ENCODE measurements at regions of chr7 and their contacts with region 1.

Region 1: GRCh38 chr7:13279854-13280435 is 592.5 kb downstream of the ARL4A start:
- DNase-seq: no peak
- H3K4me3 ChIP-seq: no peak overlapping the region
- H3K4me3 Mint-ChIP-seq: no peak overlapping the region
- H3K27ac Mint-ChIP-seq: no peak overlapping the region
- H3K4me1 ChIP-seq: no peaks in the 10 kb centered on the region; the same call in 1 of the 2 replicates
- H3K4me1 Mint-ChIP-seq: no peaks in the 10 kb centered on the region
- H3K27me3 ChIP-seq: no peaks in the 10 kb centered on the region
- H3K27me3 Mint-ChIP-seq: no peaks in the 10 kb centered on the region
- CTCF ChIP-seq: peak in 1 of 2 experiments; percentile 15

Region 2: DNA sequence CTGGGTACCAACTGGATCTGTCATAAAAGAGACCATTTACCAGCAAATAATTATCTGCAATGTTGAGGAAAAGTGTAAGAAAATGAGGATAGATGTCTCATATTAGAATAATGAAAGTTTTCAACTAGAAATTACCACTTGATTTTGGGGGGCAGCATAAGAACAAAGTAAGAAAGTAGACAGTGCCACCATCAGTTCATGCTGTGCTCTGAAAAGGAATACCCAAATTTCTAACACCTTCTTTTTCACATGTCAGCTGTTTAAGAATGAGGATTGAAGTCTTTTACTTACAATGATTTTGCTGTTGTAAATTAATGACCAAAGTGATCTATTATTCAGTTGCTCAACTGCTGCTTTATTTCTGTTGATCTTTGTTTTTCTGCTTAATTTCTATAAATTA is 131.2 kb after region 1 on chr7:
- CTCF ChIA-PET with region 1: no interaction called
- POLR2A ChIA-PET with region 1: no interaction called
- intact Hi-C with region 1: loop called (anchors 2 kb)
- DNase-seq: no peak
- H3K4me3 ChIP-seq: no peak overlapping the region
- H3K4me3 Mint-ChIP-seq: no peak overlapping the region
- H3K27ac Mint-ChIP-seq: no peak overlapping the region
- H3K4me1 ChIP-seq: peaks cover 12% of the 10 kb centered on the region
- H3K4me1 Mint-ChIP-seq: peaks cover 6% of the 10 kb centered on the region
- H3K27me3 ChIP-seq: no peaks in the 10 kb centered on the region
- H3K27me3 Mint-ChIP-seq: no peaks in the 10 kb centered on the region
- CTCF ChIP-seq: no peak

Region 3: DNA sequence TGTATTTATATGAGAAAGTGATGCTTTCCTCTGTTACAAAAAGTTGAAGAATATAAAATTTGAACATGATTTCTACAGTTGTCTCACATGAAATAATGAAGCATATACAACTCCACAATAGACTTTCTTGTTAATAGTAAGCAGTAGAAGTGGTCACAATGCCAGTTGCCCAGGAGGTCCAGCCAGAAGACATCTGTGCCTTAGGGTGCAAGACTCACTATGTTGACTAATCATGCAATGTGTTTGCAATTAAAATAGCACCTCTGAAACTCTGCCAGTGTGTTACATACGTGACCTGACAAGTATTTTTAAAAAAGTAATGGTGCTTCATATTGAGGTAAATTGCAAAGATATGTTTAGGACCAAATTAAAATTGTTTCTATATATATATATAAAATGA is 162.3 kb after region 1 on chr7:
- CTCF ChIA-PET with region 1: no interaction called
- POLR2A ChIA-PET with region 1: no interaction called
- intact Hi-C with region 1: no loop called
- DNase-seq: no peak
- H3K4me3 ChIP-seq: no peak overlapping the region
- H3K4me3 Mint-ChIP-seq: no peak overlapping the region
- H3K27ac Mint-ChIP-seq: no peak overlapping the region
- H3K4me1 ChIP-seq: 0 out of 2 replicates have a peak, but pooled peaks cover 4% of the 10 kb centered on the region
- H3K4me1 Mint-ChIP-seq: peaks cover 6% of the 10 kb centered on the region
- H3K27me3 ChIP-seq: no peaks in the 10 kb centered on the region
- H3K27me3 Mint-ChIP-seq: no peaks in the 10 kb centered on the region
- CTCF ChIP-seq: no peak

Region 4: DNA sequence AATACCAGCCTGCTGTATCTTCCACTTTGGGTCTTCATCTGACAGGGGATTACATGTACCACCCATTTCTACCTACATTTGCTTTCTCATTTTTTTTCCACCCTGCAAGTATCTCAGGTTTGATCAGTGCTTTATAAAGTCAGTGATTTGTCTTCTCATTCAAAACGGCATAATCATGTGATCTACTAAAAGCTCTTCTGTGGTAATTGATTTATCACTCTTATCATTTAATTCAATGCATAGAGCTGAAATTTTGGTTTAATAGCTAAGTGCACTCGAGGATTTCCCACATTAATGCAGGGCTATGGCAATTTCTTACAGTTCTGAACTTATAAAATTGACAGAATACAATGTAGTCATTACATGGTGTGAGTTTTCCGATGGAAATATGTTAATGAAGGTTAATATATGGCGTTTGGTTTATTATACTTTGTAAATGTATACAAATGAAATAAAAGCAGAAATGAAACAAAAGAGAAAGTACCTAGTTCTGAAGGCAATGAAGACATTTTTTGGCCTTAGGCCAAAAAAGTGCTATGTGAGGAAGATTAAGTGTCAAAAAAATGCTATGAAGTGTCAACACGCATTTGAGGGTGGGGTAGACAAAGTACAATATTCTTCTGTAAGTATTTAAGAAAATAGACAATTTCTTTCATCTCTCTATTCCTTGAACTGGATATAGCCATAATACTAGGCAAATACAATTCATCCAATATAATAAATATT is 252.2 kb after region 1 on chr7:
- CTCF ChIA-PET with region 1: no interaction called
- POLR2A ChIA-PET with region 1: no interaction called
- intact Hi-C with region 1: loop called (anchors 5 kb)
- DNase-seq: no peak
- H3K4me3 ChIP-seq: no peak overlapping the region
- H3K4me3 Mint-ChIP-seq: no peak overlapping the region
- H3K27ac Mint-ChIP-seq: no peak overlapping the region
- H3K4me1 ChIP-seq: no peaks in the 10 kb centered on the region
- H3K4me1 Mint-ChIP-seq: no peaks in the 10 kb centered on the region
- H3K27me3 ChIP-seq: no peaks in the 10 kb centered on the region
- H3K27me3 Mint-ChIP-seq: no peaks in the 10 kb centered on the region
- CTCF ChIP-seq: no peak

Region 5: GRCh38 chr7:13725591-13725990 is 445.6 kb after region 1 on chr7:
- CTCF ChIA-PET with region 1: no interaction called
- POLR2A ChIA-PET with region 1: no interaction called
- intact Hi-C with region 1: loop called (anchors 5 kb)
- DNase-seq: no peak
- H3K4me3 ChIP-seq: no peak overlapping the region
- H3K4me3 Mint-ChIP-seq: no peak overlapping the region
- H3K27ac Mint-ChIP-seq: no peak overlapping the region
- H3K4me1 ChIP-seq: no peaks in the 10 kb centered on the region
- H3K4me1 Mint-ChIP-seq: no peaks in the 10 kb centered on the region
- H3K27me3 ChIP-seq: no peaks in the 10 kb centered on the region
- H3K27me3 Mint-ChIP-seq: no peaks in the 10 kb centered on the region
- CTCF ChIP-seq: peak in 1 of 2 experiments; percentile 22

Region 6: DNA sequence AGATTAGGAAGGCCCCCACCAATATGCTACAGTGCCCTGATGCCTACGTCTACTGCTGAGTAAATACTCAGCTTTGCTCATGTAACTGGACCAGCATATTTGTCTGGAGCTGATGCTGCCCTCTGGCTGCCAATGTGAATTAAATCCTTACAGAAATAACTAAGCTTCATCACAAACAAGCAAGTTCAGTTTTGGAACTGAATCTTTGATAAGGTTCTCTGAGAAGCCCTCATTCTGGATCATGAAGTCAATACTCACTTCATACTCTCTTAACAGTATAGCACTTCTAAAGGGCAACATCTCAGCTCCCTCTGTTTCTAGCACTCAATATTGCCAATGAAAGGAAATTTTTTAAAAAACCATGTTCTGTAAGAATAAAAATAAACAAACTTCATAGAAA is 462.9 kb after region 1 on chr7:
- CTCF ChIA-PET with region 1: interaction called, 13 read pairs
- POLR2A ChIA-PET with region 1: no interaction called
- intact Hi-C with region 1: loop called (anchors 1 kb)
- DNase-seq: peak; percentile 38 to 48
- H3K4me3 ChIP-seq: no peak overlapping the region
- H3K4me3 Mint-ChIP-seq: no peak overlapping the region
- H3K27ac Mint-ChIP-seq: no peak overlapping the region
- H3K4me1 ChIP-seq: peaks cover 12% of the 10 kb centered on the region; the same call in 1 of the 2 replicates
- H3K4me1 Mint-ChIP-seq: peaks cover 6% of the 10 kb centered on the region
- H3K27me3 ChIP-seq: no peaks in the 10 kb centered on the region
- H3K27me3 Mint-ChIP-seq: no peaks in the 10 kb centered on the region
- CTCF ChIP-seq: peak; percentile 48 to 49

Measured in Caco-2 (cell line).